Mammary epithelial cell (primary cell): ENCODE measurements at regions of chr4 and their contacts with region 1.

Region 1: GRCh38 chr4:5812506-5813229 is 80.2 kb downstream of the CRMP1 start:
- DNase-seq: peak; percentile 55
- H3K4me3 ChIP-seq: no peak overlapping the region
- H3K27ac ChIP-seq: no peak overlapping the region
- H3K4me1 ChIP-seq: no peaks in the 10 kb centered on the region
- H3K27me3 ChIP-seq: no peaks in the 10 kb centered on the region
- CTCF ChIP-seq: peak; percentile 66 to 77

Region 2: GRCh38 chr4:4995103-4995907 is 817.4 kb before region 1 on chr4:
- CTCF ChIA-PET with region 1: no interaction called
- dilution Hi-C with region 1: no loop called
- in situ Hi-C with region 1: no loop called
- intact Hi-C with region 1: loop called (anchors 2 kb)
- DNase-seq: peak; percentile 42
- H3K4me3 ChIP-seq: no peak overlapping the region
- H3K27ac ChIP-seq: no peak overlapping the region
- H3K4me1 ChIP-seq: no peaks in the 10 kb centered on the region
- H3K27me3 ChIP-seq: peaks cover 2% of the 10 kb centered on the region
- CTCF ChIP-seq: peak; percentile 89 to 95

Region 3: DNA sequence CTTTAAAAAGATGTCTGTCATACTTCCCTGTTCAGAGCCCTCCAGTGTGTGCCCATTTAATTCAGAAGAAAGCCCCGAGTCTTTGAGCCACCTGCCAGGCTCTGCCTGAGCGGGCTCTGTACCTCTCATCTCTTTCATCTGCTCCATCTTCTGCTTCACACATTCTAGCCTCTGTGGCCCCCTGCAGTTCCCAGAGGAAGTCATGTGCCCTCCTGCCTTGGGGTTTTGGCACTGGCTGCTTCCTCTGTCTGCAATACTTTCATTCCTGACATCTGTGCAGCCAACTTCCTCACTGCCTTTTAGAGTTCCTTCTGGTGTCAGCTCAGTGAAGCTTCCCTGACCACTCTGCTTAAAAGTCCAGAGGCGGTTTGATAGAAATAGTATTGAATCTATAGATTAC is 767.6 kb before region 1 on chr4:
- CTCF ChIA-PET with region 1: no interaction called
- dilution Hi-C with region 1: no loop called
- in situ Hi-C with region 1: loop called in 1 of 2 experiments (anchors 10 kb)
- intact Hi-C with region 1: loop called (anchors 1 kb)
- DNase-seq: no peak
- H3K4me3 ChIP-seq: no peak overlapping the region
- H3K27ac ChIP-seq: no peak overlapping the region
- H3K4me1 ChIP-seq: no peaks in the 10 kb centered on the region
- H3K27me3 ChIP-seq: no peaks in the 10 kb centered on the region
- CTCF ChIP-seq: no peak

Region 4: GRCh38 chr4:5050520-5051277 is 762.0 kb before region 1 on chr4:
- CTCF ChIA-PET with region 1: no interaction called
- dilution Hi-C with region 1: no loop called
- in situ Hi-C with region 1: loop called in 1 of 2 experiments (anchors 10 kb)
- intact Hi-C with region 1: loop called (anchors 1 kb)
- DNase-seq: peak; percentile 63
- H3K4me3 ChIP-seq: peak overlapping the region; percentile 46 to 59 (median 53)
- H3K27ac ChIP-seq: no peak overlapping the region
- H3K4me1 ChIP-seq: peaks cover 12% of the 10 kb centered on the region
- H3K27me3 ChIP-seq: no peaks in the 10 kb centered on the region
- CTCF ChIP-seq: peak; percentile 59 to 81

Region 5: DNA sequence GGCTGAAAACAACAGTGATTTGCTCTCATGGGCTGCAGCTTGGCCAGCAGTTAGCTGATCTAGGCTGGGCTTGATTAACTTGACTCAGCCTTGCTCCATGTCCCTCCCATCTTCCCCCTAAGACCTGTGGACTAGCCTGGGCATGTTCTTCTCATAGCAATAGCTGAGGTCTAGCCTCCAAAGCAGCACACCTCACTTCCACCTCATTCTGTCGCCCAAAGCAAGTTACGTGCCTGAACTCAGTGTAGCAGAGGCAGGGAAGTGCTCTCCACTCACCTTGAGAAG is 39.5 kb before region 1 on chr4:
- CTCF ChIA-PET with region 1: no interaction called
- dilution Hi-C with region 1: loop called (anchors 5 kb)
- in situ Hi-C with region 1: no loop called
- intact Hi-C with region 1: no loop called
- DNase-seq: peak; percentile 98
- H3K4me3 ChIP-seq: no peak overlapping the region
- H3K27ac ChIP-seq: peak overlapping the region; percentile 89
- H3K4me1 ChIP-seq: peaks cover 26% of the 10 kb centered on the region
- H3K27me3 ChIP-seq: no peaks in the 10 kb centered on the region
- CTCF ChIP-seq: no peak

Region 6: GRCh38 chr4:5874811-5875449 is 62.3 kb after region 1 on chr4:
- CTCF ChIA-PET with region 1: no interaction called
- dilution Hi-C with region 1: no loop called
- in situ Hi-C with region 1: no loop called
- intact Hi-C with region 1: no loop called
- DNase-seq: peak; percentile 20
- H3K4me3 ChIP-seq: no peak overlapping the region
- H3K27ac ChIP-seq: no peak overlapping the region
- H3K4me1 ChIP-seq: no peaks in the 10 kb centered on the region
- H3K27me3 ChIP-seq: no peaks in the 10 kb centered on the region
- CTCF ChIP-seq: no peak